Activated CD8-positive, alpha-beta T cell treated with anti-CD3 and anti-CD28 coated beads, Interleukin-2, amount 10 ng/mL, durations not matched to agents 7 days and 5 days (primary cell): ENCODE measurements at regions of chr11 and their contacts with region 1.

Region 1: DNA sequence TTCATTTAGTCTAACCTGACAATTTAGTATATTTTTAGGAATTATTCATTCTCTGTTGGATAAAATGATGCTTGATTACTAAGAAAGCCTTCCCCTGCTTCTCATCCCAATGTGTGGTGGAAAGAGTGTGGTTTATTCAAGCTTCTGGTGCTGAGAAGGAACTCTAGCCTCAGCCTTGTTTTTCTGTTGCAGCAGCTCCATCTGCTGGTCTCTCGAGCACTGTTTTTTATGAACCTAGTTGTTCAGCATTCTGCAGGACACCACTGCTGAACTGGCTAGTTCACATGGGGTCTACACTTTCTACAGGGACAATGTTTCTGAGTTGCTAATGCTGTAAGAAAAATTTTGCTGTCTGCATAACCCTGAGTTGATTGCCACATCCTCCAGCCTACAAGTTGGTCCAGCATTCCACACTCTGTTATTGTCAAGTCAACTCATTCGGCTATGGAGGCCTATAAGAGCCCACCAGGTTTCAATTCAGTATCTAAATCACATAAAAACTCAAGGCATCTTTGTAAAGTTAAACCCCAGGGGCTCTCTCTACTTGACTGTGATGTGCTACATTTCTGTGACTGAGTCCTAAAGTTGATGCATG is 14.3 kb downstream of the OR2AG2 start:
- DNase-seq: peak; percentile 76
- ATAC-seq: peak; percentile 90
- H3K4me3 Mint-ChIP-seq: no peak overlapping the region
- H3K27ac Mint-ChIP-seq: no peak overlapping the region
- H3K4me1 Mint-ChIP-seq: no peaks in the 10 kb centered on the region
- H3K27me3 Mint-ChIP-seq: peaks cover 2% of the 10 kb centered on the region

Region 2: DNA sequence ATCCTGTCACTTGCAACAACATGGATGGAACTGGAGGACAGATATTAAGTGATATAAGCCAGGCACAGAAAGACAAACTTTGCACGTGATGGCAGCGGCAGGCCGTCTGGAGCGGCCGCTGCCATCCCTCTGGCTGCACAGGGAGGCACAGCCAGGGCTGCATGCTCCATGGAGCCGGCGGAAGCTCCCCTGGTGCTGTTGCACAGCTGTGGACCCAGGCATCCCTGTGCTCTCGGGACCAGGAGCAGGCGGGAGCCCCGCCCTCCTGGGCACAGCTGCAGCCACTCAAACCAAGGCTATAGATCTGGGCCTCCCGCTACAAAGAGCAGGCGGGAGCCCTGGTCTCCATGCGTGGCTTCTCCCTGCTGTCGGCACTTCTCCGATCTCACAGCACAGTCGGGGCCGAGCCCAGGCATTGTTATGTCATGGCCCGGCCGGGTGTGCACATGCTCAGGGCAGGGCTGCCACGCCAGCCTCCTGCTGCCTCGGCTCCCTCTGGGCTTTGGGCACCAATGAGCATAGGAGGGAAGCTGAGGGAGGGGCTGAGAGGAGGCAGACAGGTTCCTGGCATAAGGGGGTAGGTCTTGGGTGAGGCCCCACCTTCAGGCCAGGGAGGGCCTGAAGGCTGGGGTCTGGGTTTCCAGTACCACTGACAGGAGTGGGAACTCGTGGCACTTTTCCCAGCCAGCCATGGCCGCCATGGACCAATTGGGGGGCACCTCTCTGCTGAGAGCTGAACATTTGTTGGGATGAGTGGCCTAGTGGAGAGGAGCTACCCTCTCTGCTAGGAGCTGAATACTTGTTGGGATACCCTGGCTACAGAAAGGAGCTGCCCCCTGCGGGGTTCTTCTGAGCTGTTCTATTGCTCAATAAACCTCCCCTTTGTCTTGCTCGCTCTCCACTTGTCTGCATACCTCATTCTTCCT is 170.8 kb before region 1 on chr11:
- CTCF ChIA-PET with region 1: no interaction called
- POLR2A ChIA-PET with region 1: no interaction called
- DNase-seq: peak; percentile 14
- ATAC-seq: no peak
- H3K4me3 Mint-ChIP-seq: no peak overlapping the region
- H3K27ac Mint-ChIP-seq: no peak overlapping the region
- H3K4me1 Mint-ChIP-seq: no peaks in the 10 kb centered on the region
- H3K27me3 Mint-ChIP-seq: no peaks in the 10 kb centered on the region

Region 3: DNA sequence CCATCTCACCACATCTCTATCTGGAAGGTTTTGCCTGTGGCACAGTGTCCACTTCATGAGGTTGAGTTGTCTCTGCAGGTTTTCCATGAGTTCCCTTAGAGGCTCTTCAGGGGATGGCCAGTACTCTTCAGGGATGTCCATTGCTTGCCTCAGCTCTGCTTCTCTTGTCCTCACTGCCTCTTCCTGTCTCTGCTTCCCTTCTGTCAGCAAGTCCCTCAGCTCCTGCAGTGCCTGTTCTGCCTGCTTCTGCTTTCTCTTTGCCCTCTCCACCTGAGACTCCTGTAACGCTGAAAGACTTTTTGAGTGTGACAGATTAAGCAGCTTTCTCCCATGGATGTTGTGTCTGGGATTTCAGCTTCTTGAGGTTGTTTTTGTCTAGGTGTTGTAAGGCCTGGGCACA is 36.1 kb before region 1 on chr11:
- CTCF ChIA-PET with region 1: interaction called, 21 read pairs
- POLR2A ChIA-PET with region 1: no interaction called
- DNase-seq: no peak
- ATAC-seq: no peak
- H3K4me3 Mint-ChIP-seq: no peak overlapping the region
- H3K27ac Mint-ChIP-seq: peak overlapping the region; percentile 44
- H3K4me1 Mint-ChIP-seq: peaks cover 46% of the 10 kb centered on the region
- H3K27me3 Mint-ChIP-seq: no peaks in the 10 kb centered on the region

Region 4: GRCh38 chr11:6727971-6728760 is 29.3 kb before region 1 on chr11:
- CTCF ChIA-PET with region 1: interaction called, 563 read pairs
- POLR2A ChIA-PET with region 1: no interaction called
- DNase-seq: no peak
- ATAC-seq: no peak
- H3K4me3 Mint-ChIP-seq: no peak overlapping the region
- H3K27ac Mint-ChIP-seq: no peak overlapping the region
- H3K4me1 Mint-ChIP-seq: peaks cover 42% of the 10 kb centered on the region
- H3K27me3 Mint-ChIP-seq: no peaks in the 10 kb centered on the region

Region 5: DNA sequence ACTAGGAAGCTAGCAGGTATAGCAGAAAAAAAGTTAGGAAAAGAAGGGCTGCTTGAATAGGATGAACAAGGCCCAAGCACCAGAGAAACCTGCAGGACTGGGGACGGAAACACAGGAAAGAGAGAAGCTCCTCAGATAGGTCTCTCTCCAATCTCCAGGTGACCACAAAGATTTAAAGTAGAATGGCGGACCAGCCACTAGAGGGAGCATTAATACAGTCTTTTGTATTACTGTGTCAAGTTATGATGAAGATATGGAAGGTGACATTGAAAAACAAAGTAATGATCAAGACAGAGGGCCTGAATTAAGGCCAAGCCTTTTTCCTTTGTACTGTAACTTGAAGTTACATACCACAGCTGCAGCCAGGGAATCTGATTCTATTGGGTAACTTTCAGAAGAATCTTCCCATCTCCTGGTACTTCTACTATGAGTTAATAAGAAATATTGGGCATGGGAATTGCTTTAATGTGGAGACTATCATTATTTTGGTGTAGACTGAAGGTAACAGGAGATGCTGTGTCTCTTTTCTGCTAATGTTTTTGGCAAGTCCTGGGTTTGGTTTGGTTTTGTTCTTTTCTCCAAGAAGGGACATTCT is 19.5 kb before region 1 on chr11:
- CTCF ChIA-PET with region 1: interaction called, 563 read pairs
- POLR2A ChIA-PET with region 1: no interaction called
- DNase-seq: peak; percentile 83
- ATAC-seq: peak; percentile 77
- H3K4me3 Mint-ChIP-seq: no peak overlapping the region
- H3K27ac Mint-ChIP-seq: no peak overlapping the region
- H3K4me1 Mint-ChIP-seq: peaks cover 87% of the 10 kb centered on the region
- H3K27me3 Mint-ChIP-seq: no peaks in the 10 kb centered on the region

Region 6: DNA sequence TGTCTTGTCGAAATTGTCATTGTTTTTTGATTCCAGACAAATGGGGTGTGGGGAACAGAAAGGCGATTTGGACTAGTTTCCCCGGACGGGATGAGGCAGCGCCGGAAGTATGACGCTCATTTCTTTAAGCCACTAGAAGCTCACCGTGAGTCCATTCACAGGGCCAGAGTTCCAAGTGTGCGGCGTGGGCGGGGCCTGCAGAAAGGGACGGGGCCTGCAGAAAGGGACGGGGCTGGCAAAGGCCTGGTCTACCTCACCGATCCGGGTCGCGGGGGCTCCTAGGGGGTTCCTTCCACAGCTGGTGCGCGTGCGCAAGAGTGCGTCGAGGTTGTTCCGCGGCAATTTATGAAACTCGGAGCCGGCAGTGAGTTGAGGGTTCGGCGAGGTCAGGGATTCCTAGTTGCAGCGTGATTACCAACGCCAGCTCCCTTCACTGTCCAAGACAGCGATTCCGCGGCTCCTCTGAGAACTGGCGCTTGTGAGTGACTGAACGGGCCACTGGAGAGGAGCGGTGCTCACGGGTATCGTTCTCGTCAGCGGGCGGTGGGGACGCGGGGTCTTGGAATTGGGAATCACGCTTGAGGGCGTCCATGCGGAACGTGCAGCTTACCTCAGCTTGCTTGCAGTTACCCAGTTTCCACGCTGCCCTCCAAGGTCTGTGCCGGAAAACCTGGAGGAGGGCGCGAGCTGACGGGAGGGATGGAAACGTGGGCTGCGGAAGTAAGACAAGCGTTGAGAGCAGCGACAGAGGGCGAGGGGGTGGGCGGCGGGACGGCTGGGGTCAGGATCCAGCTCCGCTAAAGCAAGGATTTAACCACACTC is 168.9 kb after region 1 on chr11 and contains the start of gene ZNF215:
- CTCF ChIA-PET with region 1: no interaction called
- POLR2A ChIA-PET with region 1: no interaction called
- DNase-seq: peak; percentile 61
- ATAC-seq: peak; percentile 82
- H3K4me3 Mint-ChIP-seq: peak within 1 kb of the TSS; percentile 82
- H3K27ac Mint-ChIP-seq: peak within 1 kb of the TSS; percentile 33
- H3K4me1 Mint-ChIP-seq: peaks cover 17% of the 10 kb centered on the region
- H3K27me3 Mint-ChIP-seq: peaks cover 29% of the 10 kb centered on the region
- total RNA-seq, gene ZNF215: 1.3 to 1.6 TPM